ENCODE measurements at regions of chr2 and their contacts with region 1.

Region 1: GRCh38 chr2:223601932-223602666 is at the start of gene SCG2:
- DNase-seq: peak; percentile 14 to 21
- ATAC-seq: peak in 1 of 2 donors; percentile 64
- H3K4me3 ChIP-seq: peak within 1 kb of the TSS in 1 of 4 donors; percentile 6
- H3K27ac ChIP-seq: no peak within 1 kb of the TSS
- H3K4me1 ChIP-seq: no peaks in the 10 kb centered on the region
- H3K27me3 ChIP-seq: no peaks in the 10 kb centered on the region
- CTCF ChIP-seq: peak in 2 of 5 experiments; percentile 22 to 38
- POLR2A ChIP-seq: no peak
- total RNA-seq, gene SCG2: not detected

Region 2: DNA sequence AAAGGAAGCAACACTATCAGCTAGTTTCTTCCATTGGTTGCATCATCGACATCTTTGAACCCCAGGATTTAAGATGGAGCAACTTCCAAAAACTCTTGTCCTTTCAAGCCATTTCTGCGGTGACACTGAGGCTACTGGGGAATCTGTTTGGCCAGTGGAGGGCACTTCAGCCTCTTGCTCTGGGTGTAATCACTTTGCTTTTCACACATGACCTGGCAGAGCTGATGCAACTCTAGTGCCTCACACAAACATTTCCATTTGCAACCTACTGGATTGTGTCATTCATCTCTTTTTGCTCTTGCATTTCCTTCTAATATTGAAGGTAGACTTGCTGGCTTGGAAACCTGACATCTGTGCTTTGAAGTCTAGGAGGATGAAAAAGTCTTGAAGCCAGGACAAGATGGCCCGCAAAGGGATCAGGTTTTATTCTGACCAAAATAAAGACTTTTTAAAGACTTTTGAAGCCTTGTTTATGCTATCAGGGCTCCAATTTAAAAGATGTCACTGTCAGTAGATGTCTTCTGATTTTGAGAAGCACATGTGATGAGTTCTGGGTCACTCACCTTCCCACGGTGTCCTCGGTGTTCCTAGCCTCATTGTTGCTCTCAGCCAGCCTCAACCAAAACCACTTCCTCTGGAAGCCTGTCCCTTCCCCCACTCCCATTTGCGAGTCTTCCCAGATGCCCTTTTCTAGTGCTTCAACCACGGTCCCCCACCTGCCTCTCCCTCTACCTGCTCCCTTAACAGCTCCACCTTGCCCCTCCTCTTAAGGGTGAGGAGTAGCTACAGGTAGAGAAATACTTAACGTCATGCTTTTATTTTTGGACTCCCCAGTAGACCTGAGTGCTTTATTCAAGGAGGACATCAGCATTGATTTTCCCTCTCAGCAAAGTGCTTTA is 619.8 kb before region 1 on chr2:
- in situ Hi-C with region 1: loop called in 1 of 4 experiments (anchors 25 kb)
- intact Hi-C with region 1: no loop called
- DNase-seq: peak; percentile 44 to 48
- ATAC-seq: peak; percentile 85 to 93
- H3K4me3 ChIP-seq: no peak overlapping the region
- H3K27ac ChIP-seq: no peak overlapping the region
- H3K4me1 ChIP-seq: no peaks in the 10 kb centered on the region
- H3K27me3 ChIP-seq: no peaks in the 10 kb centered on the region
- CTCF ChIP-seq: peak in 2 of 5 experiments; percentile 18 to 35
- POLR2A ChIP-seq: no peak